Activated CD4-positive, alpha-beta T cell treated with anti-CD3 and anti-CD28 coated beads for 36 hours (primary cell): ENCODE measurements at regions of chr19 and their contacts with region 1.

Region 1: DNA sequence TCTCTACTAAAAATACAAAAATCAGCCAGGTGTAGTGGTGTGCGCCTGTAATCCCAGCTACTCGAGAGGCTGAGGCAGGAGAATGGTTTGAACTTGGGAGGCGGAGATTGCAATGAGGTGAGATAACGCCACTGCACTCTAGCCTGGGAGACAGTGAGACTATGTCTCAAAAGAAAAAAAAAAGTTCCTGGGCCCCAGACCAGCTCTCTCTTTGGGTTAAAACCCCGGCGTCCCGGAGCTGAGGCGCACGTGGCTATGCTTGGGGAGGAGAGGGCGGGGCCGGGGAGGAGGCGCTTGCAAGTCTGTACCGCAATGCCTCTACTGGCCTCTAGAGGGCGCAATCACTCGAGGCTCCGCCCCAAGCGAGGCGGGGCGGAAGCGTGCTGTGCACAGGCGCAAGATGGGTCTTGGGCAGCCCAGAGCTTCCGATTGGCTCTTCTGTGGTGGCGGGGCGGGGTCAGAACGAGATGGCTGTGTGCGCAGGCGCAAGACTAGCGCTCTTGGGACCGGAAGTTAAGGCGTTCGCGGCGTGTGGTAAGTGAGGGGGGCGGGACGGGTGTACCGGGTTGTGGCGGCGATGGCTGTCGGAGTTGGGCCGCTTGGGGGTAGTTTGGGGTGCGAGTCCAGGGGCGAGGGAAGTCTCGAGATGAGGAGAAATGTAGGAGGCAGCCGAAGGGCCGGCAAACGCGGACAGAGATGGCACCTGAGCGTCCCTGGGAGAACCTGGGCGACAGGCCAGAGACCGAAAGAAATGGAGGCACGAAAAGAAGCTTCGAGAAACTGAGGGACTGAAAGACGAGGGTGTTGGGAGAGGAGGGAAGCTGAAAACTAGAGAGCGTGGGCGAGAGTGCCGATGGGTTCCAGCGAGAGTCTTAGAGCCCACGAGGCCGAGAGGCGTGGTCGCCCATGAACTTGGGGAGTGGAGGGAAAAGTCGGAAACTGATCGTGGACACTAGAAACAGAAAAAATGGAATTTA is at the start of gene DHX34:
- DNase-seq: peak; percentile 99
- ATAC-seq: peak; percentile 98
- H3K4me3 Mint-ChIP-seq: peak within 1 kb of the TSS; percentile 92
- H3K27ac Mint-ChIP-seq: peak within 1 kb of the TSS; percentile 94
- H3K4me1 Mint-ChIP-seq: peaks cover 35% of the 10 kb centered on the region
- H3K27me3 Mint-ChIP-seq: no peaks in the 10 kb centered on the region
- total RNA-seq, gene DHX34: 15.4 to 17.9 TPM

Region 2: DNA sequence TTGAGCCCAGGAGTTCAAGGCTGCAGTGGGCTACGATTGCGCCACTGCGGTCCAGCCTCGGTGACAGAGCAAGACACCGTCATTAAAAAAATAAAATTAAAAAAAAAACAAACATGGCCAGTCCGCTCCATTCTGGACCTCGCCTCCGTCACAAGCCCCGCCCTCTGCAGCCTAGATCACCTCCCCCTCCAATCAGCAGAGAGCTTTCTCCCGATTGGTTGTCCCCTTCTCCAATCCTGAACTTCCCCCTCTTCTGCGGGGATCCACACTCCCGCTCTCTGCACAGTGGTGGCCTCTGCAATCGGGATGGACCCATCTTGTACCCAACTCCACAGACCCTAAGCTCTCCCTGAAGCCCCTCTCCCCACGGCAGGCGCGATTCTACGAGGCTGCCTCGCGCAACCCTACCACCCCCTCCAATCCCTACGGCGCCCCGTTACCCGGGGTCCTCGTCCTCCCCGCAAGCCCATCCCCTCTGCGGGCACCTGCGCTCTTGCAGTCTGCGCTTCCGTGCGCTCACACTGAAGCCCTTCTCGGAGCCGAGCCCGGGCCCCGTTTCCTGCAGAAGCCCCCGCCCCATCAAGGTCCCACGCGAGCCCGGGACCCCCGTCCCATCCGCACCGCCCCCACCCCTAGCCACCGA is 301.2 kb before region 1 on chr19:
- CTCF ChIA-PET with region 1: no interaction called
- POLR2A ChIA-PET with region 1: no interaction called
- intact Hi-C with region 1: loop called in 1 of 2 experiments (anchors 1 kb)
- DNase-seq: peak; percentile 92
- ATAC-seq: peak; percentile 73
- H3K4me3 Mint-ChIP-seq: peak overlapping the region; percentile 90
- H3K27ac Mint-ChIP-seq: peak overlapping the region; percentile 86
- H3K4me1 Mint-ChIP-seq: peaks cover 8% of the 10 kb centered on the region
- H3K27me3 Mint-ChIP-seq: no peaks in the 10 kb centered on the region

Region 3: DNA sequence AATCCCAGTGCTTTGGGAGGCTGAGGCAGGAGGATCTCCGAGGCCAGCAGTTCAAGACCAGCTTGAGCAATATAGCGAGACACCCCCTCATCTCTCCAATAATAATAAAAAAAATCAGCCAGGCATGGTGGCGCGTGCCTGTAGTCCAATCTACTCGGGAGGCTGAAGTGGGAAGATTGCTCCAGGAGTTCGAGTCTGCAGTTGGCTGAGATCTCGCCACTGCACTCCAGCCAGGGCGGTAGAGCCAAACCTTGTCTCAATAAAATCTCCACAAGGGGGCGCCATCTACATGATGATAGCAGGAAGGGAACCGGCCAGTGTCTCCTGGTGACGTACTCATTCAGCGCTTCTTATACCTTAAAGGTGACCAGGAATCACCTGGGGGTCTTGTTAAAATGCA is 53.1 kb before region 1 on chr19:
- CTCF ChIA-PET with region 1: interaction called, 5 read pairs
- POLR2A ChIA-PET with region 1: interaction called, 3 read pairs
- intact Hi-C with region 1: loop called in 1 of 2 experiments (anchors 1 kb)
- DNase-seq: peak; percentile 87
- ATAC-seq: peak; percentile 98
- H3K4me3 Mint-ChIP-seq: no peak overlapping the region
- H3K27ac Mint-ChIP-seq: no peak overlapping the region
- H3K4me1 Mint-ChIP-seq: peaks cover 2% of the 10 kb centered on the region
- H3K27me3 Mint-ChIP-seq: no peaks in the 10 kb centered on the region

Region 4: DNA sequence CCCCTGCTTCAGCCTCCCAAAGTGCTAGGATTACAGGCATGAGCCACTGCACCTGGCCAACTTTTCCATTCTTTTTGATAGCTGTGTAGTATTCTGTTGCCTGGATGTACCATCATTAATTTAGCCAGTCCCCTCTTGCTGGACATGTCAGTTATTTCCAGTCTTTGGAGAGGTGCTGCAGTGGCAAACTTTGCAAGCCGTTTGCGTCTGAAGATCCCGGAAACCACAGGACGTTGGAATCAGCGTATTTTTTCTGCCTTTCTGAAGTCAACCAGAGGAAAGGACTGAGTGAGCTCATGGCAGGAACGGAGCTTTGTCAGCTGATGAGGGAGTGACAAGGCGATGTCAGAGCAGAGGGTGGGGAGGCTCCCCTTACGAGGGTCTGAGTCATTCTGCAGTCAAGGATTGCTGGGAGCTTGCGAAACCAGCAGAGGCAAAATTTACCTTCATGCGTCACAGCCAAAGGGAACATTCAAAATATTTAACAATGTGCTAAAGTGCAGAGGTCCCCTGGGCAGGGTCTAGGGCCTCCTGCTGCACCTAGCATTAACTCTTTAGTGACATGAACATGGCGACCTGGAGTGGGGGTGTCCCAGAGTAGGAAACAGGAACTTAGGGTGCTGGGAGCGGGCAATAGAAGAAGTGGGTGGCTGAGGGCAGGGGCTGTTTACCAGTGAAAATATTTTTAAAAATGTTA is 33.8 kb before region 1 on chr19:
- CTCF ChIA-PET with region 1: no interaction called
- POLR2A ChIA-PET with region 1: no interaction called
- intact Hi-C with region 1: no loop called
- DNase-seq: peak; percentile 63
- ATAC-seq: peak; percentile 97
- H3K4me3 Mint-ChIP-seq: no peak overlapping the region
- H3K27ac Mint-ChIP-seq: no peak overlapping the region
- H3K4me1 Mint-ChIP-seq: peaks cover 6% of the 10 kb centered on the region
- H3K27me3 Mint-ChIP-seq: peaks cover 17% of the 10 kb centered on the region

Region 5: DNA sequence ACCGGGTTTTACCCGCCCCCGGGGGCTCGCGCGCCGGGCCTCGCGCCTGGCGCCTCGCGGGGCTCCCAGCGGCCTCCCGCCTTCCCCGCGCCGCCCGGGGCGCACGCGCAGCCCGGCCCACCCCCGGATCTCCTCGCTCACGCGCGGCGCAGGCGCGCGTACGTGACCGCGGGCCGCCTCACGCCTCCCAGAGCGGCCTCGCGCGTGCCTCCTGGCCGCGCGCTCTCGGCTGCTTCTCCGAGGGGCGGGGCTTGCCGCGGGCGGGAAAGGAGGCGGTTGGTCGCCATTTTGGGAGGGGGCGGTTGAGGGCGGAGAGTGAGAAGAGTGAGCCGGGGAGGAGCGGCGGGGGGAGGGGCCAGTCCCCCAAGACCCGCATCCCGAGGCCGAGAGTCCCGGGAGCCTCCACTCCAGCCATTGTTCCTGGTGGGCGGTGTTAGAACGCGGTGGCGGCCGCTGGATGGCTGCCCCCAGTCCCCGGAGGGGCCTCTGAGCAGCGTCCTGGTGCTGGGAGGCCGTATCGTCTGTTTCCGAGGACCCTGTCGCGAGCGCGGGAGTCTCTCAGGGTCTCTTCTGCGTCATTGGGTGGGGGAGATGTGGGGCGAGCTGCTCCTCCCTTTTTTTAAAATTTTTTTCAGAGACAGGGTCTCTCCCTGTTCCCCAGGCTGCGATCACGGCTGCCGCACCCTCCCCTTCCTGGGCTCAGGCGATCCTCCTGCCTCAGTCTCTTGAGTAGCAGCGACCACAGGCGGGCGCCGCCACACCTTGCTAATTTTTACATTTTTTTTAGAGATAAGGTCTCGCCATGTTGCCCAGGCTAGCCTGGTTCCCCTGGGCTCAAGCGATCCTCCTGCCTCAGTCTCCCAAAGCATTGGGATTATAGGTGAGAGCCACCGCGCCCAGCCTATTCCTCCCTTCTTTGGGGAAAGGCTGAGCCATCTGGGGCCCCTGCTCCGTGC is 224.2 kb after region 1 on chr19 and contains the start of gene ZNF541:
- CTCF ChIA-PET with region 1: no interaction called
- POLR2A ChIA-PET with region 1: no interaction called
- intact Hi-C with region 1: loop called in 1 of 2 experiments (anchors 1 kb)
- DNase-seq: peak; percentile 85
- ATAC-seq: peak; percentile 79
- H3K4me3 Mint-ChIP-seq: peak within 1 kb of the TSS; percentile 32
- H3K27ac Mint-ChIP-seq: peak within 1 kb of the TSS; percentile 2
- H3K4me1 Mint-ChIP-seq: peaks cover 28% of the 10 kb centered on the region
- H3K27me3 Mint-ChIP-seq: peaks cover 4% of the 10 kb centered on the region
- total RNA-seq, gene ZNF541: 0.11 to 0.14 TPM

Region 6: GRCh38 chr19:47745010-47745901 is 396.1 kb after region 1 on chr19 and contains the start of gene NOP53:
- CTCF ChIA-PET with region 1: no interaction called
- POLR2A ChIA-PET with region 1: no interaction called
- intact Hi-C with region 1: loop called in 1 of 2 experiments (anchors 1 kb)
- DNase-seq: peak; percentile 98
- ATAC-seq: peak; percentile 71
- H3K4me3 Mint-ChIP-seq: peak within 1 kb of the TSS; percentile 98
- H3K27ac Mint-ChIP-seq: peak within 1 kb of the TSS; percentile 99
- H3K4me1 Mint-ChIP-seq: peaks cover 44% of the 10 kb centered on the region
- H3K27me3 Mint-ChIP-seq: no peaks in the 10 kb centered on the region
- total RNA-seq, gene NOP53: 317 to 374 TPM

Region 7: DNA sequence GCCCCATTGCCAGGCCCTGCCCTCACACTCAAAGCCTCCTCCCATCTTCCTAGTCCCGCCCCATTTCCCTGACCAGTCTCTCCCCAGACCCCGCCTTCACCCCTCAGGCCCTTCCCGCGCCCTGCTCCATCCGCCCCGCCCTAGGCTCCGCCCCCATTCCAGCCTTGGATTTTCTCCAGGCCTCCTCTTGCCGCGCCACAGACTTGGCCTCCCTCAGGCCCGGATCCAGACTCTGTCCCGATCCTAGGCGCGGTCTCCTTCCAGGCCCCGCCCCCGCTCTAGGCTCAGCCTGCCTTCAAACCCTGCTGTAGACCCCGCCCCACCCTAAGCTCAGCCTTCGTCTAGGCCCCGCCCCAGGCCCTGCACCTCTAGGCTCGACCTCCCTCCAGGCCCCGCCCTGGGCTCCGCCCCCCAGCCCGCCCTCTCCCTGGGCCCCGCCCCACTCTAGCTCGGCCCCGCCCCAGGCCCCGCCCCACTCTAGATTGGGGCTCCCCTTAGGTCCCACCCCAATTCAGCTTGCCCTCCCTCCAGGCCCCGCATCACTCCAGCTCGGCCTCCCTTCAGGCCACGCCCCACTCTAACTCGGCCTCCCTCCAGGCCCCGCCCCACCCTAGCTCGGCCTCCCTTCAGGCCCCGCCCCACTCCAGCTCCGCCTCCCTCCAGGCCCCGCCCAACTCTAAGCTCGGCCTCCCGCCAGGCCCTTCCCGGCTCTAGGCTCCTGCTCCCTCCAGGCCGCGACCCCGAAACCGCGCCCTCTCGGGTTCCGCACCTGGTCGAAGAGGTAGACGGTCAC is 1144.0 kb after region 1 on chr19:
- CTCF ChIA-PET with region 1: no interaction called
- POLR2A ChIA-PET with region 1: no interaction called
- intact Hi-C with region 1: no loop called
- DNase-seq: peak; percentile 98
- ATAC-seq: peak; percentile 81
- H3K4me3 Mint-ChIP-seq: peak overlapping the region; percentile 68
- H3K27ac Mint-ChIP-seq: peak overlapping the region; percentile 42
- H3K4me1 Mint-ChIP-seq: peaks cover 30% of the 10 kb centered on the region
- H3K27me3 Mint-ChIP-seq: peaks cover 39% of the 10 kb centered on the region